ENCODE measurements at regions of chr4 and their contacts with region 1.

Region 1: DNA sequence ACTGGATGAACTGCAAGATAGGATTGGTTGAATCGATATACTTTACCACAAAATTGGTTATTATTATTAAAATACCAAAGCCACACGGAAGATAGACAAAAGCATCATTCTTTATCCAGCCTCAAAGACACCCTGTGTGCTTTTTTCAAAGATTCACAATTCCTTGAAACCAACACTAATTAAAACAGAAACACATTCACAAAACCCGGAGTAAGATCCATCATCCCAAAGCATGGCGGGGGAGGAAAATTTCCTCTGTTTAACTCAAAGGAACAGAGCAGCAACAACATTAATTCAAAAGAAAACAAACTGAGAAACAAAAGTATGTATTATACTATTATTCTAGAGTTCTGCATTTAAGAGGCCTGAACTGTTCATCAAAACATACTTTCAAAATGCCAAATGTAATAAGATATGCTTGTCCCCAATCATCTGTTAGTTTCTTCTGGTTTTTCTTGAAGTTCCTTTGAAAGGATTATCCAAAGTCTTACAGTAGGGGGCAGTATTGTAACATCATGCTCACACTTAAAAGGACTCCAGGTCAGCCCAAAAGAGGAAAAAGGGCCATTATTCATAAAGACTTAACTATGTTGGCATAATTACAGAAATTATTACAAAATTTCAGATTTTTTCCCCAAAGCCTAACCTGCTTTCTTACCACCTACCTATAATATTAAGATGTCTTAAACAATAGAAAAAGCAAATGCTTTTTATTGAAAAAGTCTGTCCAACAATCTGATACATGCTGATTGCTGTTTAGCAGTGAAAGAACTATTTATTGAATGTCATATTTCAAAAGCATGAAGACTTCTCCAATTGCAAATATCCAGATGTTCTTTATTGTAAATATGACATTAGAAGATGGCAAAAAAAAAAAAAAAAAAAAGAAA is 168.7 kb downstream of the SCFD2 start:
- DNase-seq: no peak
- ATAC-seq: peak; percentile 88
- H3K4me3 ChIP-seq: no peak overlapping the region
- H3K27ac ChIP-seq: no peak overlapping the region
- H3K4me1 ChIP-seq: no peaks in the 10 kb centered on the region
- H3K27me3 ChIP-seq: no peaks in the 10 kb centered on the region

Region 2: GRCh38 chr4:52813546-52813945 is 383.6 kb before region 1 on chr4:
- intact Hi-C with region 1: no loop called
- DNase-seq: no peak
- ATAC-seq: no peak
- H3K4me3 ChIP-seq: no peak overlapping the region
- H3K27ac ChIP-seq: no peak overlapping the region
- H3K4me1 ChIP-seq: no peaks in the 10 kb centered on the region
- H3K27me3 ChIP-seq: no peaks in the 10 kb centered on the region

Region 3: GRCh38 chr4:53148931-53149330 is 48.2 kb before region 1 on chr4:
- intact Hi-C with region 1: no loop called
- DNase-seq: no peak
- ATAC-seq: no peak
- H3K4me3 ChIP-seq: no peak overlapping the region
- H3K27ac ChIP-seq: no peak overlapping the region
- H3K4me1 ChIP-seq: peaks cover 0 to 2% of the 10 kb centered on the region in 2 donors
- H3K27me3 ChIP-seq: no peaks in the 10 kb centered on the region

Region 4: DNA sequence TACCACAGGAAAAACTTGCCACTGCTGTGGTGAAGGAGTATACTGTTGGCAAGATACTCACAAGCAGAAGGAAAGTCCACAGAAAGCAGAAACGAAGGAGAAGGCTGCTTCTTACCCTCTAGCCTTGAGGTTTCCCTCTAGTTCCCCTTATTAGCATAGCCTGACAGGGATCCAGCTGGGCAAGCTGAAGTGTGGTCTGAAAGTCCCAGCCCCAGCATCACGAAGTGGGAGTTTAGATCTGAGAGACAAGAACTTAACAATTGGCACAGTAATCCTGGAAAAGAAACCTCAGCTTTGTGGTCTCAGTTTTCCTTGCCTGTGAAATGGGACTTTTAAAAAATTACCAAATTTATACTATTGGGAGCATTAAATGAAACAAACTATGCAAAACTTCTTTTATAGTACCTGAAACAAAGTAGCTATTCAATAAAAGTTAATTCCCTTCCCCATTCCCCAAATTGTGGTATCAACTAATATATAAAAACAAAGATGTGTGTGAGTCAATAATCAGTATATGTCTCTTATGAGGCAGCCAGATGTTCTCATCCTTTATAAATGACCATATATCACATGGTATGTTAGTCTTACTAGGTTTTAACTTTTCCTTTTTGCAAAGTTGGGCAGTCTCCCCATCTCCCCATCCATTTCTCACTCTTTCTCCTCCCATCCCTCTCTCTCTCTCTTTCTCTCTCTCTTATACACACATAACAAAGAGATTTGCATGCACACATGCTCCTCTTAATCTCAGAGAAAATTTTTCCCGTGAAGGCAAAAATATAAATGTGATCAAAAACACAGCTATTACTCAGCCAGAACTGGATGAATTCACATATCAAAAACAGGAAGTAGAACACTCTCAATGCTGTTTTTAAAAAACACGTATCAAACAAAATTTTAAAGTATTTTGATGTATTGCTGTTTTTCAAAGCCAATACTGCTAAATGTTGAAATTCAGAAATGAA is 111.0 kb after region 1 on chr4:
- intact Hi-C with region 1: no loop called
- DNase-seq: no peak
- ATAC-seq: peak; percentile 52
- H3K4me3 ChIP-seq: no peak overlapping the region
- H3K27ac ChIP-seq: no peak overlapping the region
- H3K4me1 ChIP-seq: peaks cover 1 to 2% of the 10 kb centered on the region in 2 donors
- H3K27me3 ChIP-seq: no peaks in the 10 kb centered on the region

Region 5: DNA sequence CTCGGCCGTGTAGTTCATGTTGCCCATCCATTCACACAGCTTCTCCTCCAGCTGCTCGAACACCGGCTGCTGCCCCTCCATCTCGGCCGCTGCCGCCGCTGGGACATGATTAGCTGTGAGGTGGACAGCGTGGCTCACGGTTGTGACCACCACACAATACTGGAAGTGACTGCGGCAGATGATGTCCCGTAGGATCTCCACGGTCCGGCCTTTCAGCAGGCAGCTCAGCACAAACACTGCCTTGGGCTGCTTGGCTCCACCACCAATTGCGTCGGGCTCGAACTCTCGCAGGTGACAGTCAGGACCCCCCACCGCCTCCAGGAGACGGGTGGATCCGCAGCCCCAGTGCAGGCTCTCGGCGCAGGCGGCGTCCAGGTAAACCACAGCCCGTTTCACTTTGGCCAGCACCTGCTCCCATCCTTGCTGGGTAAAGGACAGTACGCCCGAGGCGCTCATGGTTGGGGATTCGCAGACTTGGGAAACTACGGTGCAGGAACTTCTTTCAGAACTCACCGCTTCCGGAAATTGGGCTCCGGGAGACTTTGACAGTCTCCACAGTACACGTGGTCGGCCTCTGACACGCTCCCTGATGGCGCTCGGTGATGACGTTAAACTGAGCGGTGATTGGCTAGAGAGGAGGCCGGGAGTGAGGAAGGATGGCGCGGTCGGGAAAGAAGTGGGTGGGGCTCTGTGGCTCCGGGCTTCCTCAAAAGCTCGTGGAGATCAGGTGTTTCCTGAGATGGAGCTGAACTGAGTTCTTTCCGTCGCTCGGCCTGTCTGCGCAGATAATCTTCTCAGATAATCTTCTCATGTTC is 168.6 kb after region 1 on chr4 and contains the start of gene SCFD2:
- intact Hi-C with region 1: loop called (anchors 5 to 10 kb)
- DNase-seq: peak; percentile 98
- ATAC-seq: peak; percentile 100
- H3K4me3 ChIP-seq: peak within 1 kb of the TSS; percentile 62 to 91
- H3K27ac ChIP-seq: no peak within 1 kb of the TSS
- H3K4me1 ChIP-seq: no peaks in the 10 kb centered on the region
- H3K27me3 ChIP-seq: no peaks in the 10 kb centered on the region
- total RNA-seq, gene SCFD2: 15.3 to 19.2 TPM

Region 6: GRCh38 chr4:53490965-53491622 is 294.0 kb after region 1 on chr4:
- intact Hi-C with region 1: no loop called
- DNase-seq: no peak
- ATAC-seq: peak; percentile 77
- H3K4me3 ChIP-seq: no peak overlapping the region
- H3K27ac ChIP-seq: no peak overlapping the region
- H3K4me1 ChIP-seq: peaks cover 0 to 3% of the 10 kb centered on the region in 2 donors
- H3K27me3 ChIP-seq: no peaks in the 10 kb centered on the region

Region 7: DNA sequence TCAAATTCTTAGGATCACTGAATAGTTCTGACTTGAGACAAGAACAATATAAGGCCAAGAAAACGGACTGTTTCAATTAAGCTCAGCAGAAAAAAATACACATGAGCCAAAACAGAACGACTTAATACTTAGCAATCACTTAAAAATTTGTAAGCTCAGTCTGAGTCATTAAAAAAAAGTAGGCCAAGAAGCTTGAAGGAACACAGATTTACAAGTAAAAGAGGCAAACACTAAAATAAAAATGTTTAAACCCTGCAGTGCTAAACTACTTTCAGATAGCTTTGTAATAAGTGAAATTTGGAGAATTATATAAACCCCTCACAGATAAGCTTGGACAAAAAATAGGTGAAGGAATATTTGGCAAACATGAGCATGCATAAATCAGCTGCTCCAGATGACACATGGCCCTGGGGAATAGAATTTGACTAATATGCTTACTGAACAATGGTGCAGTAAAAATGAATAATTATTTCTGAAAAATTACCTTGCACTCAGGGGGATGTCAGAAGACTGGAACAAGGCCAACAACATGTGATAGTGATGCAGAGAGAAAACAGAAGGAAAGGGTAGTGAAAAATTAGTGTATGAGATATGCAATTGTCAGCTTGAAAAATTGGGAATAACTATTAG is 344.6 kb after region 1 on chr4:
- intact Hi-C with region 1: loop called in 1 of 2 experiments (anchors 10 kb)
- DNase-seq: no peak
- ATAC-seq: peak; percentile 73
- H3K4me3 ChIP-seq: no peak overlapping the region
- H3K27ac ChIP-seq: no peak overlapping the region
- H3K4me1 ChIP-seq: peaks cover 0 to 6% of the 10 kb centered on the region in 2 donors
- H3K27me3 ChIP-seq: no peaks in the 10 kb centered on the region

Region 8: DNA sequence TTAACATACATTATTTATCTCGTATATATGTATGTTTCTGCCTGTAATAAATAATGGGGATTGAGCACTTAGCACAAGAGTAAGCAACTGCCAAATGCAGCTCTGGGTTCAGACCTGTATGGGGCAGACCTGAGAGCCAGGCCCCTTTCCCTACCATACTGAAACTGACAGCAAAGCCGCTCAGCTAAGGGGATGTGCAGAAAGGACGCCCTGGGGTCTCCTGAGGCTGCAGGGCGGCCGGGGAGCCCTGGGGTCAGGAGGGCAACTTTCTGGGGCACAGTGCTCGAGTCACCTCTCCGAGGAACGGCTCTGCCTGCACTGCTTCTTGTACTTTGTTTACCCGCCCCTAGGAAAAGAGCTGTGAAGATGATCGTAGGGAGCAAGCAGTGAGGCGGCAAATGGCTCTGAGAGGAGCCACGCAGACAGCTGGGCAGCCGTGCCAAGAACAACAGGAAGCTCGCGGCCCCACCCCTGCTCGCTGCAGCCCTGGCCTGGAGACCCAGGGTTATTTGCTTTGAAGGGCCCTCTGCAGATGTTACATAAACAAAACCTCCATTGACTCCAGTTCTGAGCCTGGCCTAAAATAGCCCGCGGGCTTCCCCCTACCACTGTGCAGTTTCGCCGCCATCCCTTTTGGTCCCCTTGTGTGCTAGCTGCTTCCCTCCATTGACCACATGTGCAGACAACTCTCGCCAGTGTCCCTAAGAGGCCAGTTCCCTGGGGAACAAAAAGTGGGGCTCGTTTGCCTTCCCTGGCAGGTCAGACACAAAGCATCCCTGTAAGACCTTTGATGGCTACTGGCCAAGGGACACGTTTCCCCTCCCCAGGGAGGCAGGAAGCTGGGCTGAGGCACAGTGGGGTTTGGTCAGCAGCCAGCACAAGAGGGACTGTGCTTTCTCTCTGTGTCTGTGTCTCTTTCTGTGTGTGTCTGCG is 505.5 kb after region 1 on chr4:
- intact Hi-C with region 1: loop called in 1 of 2 experiments (anchors 5 kb)
- DNase-seq: peak; percentile 88 to 90
- ATAC-seq: peak; percentile 92
- H3K4me3 ChIP-seq: no peak overlapping the region
- H3K27ac ChIP-seq: peak overlapping the region in 1 of 2 donors; percentile 22
- H3K4me1 ChIP-seq: no peaks in the 10 kb centered on the region
- H3K27me3 ChIP-seq: no peaks in the 10 kb centered on the region

Region 9: DNA sequence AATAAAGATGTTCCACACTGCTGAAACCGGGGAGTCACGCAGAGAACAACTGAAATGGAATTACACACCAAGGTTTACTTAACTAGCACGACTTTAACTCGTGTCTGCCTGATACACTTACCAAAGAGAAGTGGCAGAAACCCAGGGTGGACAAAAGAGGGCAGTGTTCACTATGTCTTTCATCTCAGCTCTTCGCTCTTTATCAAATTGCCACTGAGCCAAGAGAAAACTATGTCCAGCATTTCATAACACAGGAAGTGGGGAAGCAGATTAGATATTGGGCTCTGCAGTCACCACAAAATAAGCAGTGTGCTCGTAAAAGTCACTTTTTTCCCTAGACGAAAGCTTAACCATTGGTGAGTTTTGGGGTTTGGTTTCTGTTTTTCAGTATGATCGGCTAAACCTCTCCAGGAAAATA is 711.5 kb after region 1 on chr4:
- intact Hi-C with region 1: loop called (anchors 10 kb)
- DNase-seq: no peak
- ATAC-seq: peak; percentile 89
- H3K4me3 ChIP-seq: peak overlapping the region; percentile 54 to 76
- H3K27ac ChIP-seq: peak overlapping the region; percentile 51 to 82
- H3K4me1 ChIP-seq: peaks cover 2 to 4% of the 10 kb centered on the region in 2 donors
- H3K27me3 ChIP-seq: no peaks in the 10 kb centered on the region

Region 10: GRCh38 chr4:54228056-54228527 is 1031.0 kb after region 1 on chr4:
- intact Hi-C with region 1: loop called (anchors 5 kb)
- DNase-seq: peak; percentile 84 to 93
- ATAC-seq: peak; percentile 75
- H3K4me3 ChIP-seq: peak overlapping the region; percentile 59 to 78
- H3K27ac ChIP-seq: peak overlapping the region in 1 of 2 donors; percentile 65
- H3K4me1 ChIP-seq: no peaks in the 10 kb centered on the region
- H3K27me3 ChIP-seq: no peaks in the 10 kb centered on the region

Region 11: GRCh38 chr4:54233277-54233696 is 1036.2 kb after region 1 on chr4:
- intact Hi-C with region 1: loop called (anchors 5 kb)
- DNase-seq: peak; percentile 91 to 97
- ATAC-seq: peak; percentile 91
- H3K4me3 ChIP-seq: peak overlapping the region; percentile 34 to 71
- H3K27ac ChIP-seq: peak overlapping the region in 1 of 2 donors; percentile 85
- H3K4me1 ChIP-seq: no peaks in the 10 kb centered on the region
- H3K27me3 ChIP-seq: no peaks in the 10 kb centered on the region

Measured in aorta (tissue), 5 donors.